ENCODE measurements at regions of chr19 and their contacts with region 1.

Region 1: GRCh38 chr19:4267101-4267900 is 11.8 kb upstream of the SHD start:
- DNase-seq: peak; percentile 61 to 90
- H3K4me3 ChIP-seq: no peak overlapping the region
- H3K27ac ChIP-seq: no peak overlapping the region
- H3K4me1 ChIP-seq: no peaks in the 10 kb centered on the region; a peak in 1 of 7 replicates
- H3K27me3 ChIP-seq: no peaks in the 10 kb centered on the region
- CTCF ChIP-seq: peak; percentile 92 to 94 (median 94)
- EP300 ChIP-seq: no peak
- POLR2A ChIP-seq: no peak
- RAD21 ChIP-seq: peak; percentile 87 to 88

Region 2: GRCh38 chr19:4194353-4194752 is 72.9 kb before region 1 on chr19:
- CTCF ChIA-PET with region 1: no interaction called
- POLR2A ChIA-PET with region 1: no interaction called
- DNase-seq: no peak
- H3K4me3 ChIP-seq: no peak overlapping the region
- H3K27ac ChIP-seq: no peak overlapping the region
- H3K4me1 ChIP-seq: peaks cover 0 to 2% (median 0%) of the 10 kb centered on the region in 4 experiments; a peak in 3 of 7 replicates
- H3K27me3 ChIP-seq: peaks cover 0 to 7% (median 3%) of the 10 kb centered on the region in 4 experiments; a peak in 2 of 7 replicates
- CTCF ChIP-seq: no peak
- EP300 ChIP-seq: no peak
- POLR2A ChIP-seq: no peak
- RAD21 ChIP-seq: no peak

Region 3: DNA sequence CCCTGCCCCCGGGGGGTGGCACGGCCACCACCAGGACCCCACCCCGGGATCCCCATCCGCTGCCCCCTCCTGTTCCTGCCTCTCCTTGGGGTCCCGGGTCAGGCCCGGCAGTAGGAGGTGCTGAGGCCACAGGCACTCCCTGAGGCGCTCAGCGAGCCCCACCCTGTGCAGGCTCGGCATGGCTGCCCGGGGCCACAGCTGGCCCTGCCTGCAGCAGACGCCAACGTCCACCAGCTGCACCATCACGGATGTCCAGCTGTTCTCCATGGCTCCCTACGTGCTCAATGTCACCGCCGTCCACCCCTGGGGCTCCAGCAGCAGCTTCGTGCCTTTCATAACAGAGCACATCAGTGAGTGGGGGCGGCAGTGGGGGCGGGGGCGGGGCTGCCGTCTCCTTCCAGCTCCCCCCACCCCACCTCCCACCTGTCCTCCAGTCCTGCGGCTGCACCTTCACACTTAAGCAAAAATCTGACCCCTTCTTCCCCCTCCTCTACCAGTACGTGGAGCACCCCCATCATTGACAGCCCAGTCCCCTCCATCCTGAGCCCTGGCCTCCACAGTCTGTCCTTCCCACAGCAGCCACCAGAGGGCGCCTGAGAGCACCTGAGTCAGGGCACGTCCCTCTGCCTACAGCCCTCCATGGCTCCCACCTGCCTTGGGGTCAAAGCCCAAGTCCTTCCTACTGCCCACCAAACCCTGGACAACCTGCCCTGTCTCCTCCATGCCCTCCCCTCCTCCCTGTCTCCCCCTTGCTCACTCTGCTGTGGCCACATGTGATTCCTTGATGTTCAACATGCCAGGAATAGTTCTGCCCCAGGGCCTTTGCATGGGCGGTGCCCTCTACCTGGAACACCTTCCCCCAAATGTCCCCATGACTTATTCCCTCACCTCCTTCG is 34.1 kb before region 1 on chr19:
- CTCF ChIA-PET with region 1: interaction called, 12 read pairs
- POLR2A ChIA-PET with region 1: interaction called, 3 read pairs
- DNase-seq: peak in 1 of 2 experiments; percentile 98
- H3K4me3 ChIP-seq: no peak overlapping the region
- H3K27ac ChIP-seq: no peak overlapping the region
- H3K4me1 ChIP-seq: peaks cover 0 to 7% (median 3%) of the 10 kb centered on the region in 4 experiments; a peak in 3 of 7 replicates
- H3K27me3 ChIP-seq: no peaks in the 10 kb centered on the region
- CTCF ChIP-seq: peak; percentile 80 to 97 (median 96)
- EP300 ChIP-seq: no peak
- POLR2A ChIP-seq: no peak
- RAD21 ChIP-seq: peak; percentile 31 to 39; a peak in 3 of 4 replicates

Region 4: GRCh38 chr19:4256563-4256962 is 10.7 kb before region 1 on chr19:
- CTCF ChIA-PET with region 1: interaction called, 27 read pairs
- POLR2A ChIA-PET with region 1: interaction called, 7 read pairs
- DNase-seq: no peak
- H3K4me3 ChIP-seq: no peak overlapping the region
- H3K27ac ChIP-seq: no peak overlapping the region
- H3K4me1 ChIP-seq: no peaks in the 10 kb centered on the region
- H3K27me3 ChIP-seq: no peaks in the 10 kb centered on the region
- CTCF ChIP-seq: peak; percentile 40 to 71 (median 66)
- EP300 ChIP-seq: no peak
- POLR2A ChIP-seq: no peak
- RAD21 ChIP-seq: no peak

Region 5: GRCh38 chr19:4284176-4284958 is 17.1 kb after region 1 on chr19:
- CTCF ChIA-PET with region 1: interaction called, 27 read pairs
- POLR2A ChIA-PET with region 1: interaction called, 11 read pairs
- DNase-seq: peak; percentile 71 to 89
- H3K4me3 ChIP-seq: peak overlapping the region; percentile 7 to 46 (median 16); a peak in 5 of 8 replicates
- H3K27ac ChIP-seq: no peak overlapping the region
- H3K4me1 ChIP-seq: peaks cover 0 to 4% (median 1%) of the 10 kb centered on the region in 4 experiments; a peak in 4 of 7 replicates
- H3K27me3 ChIP-seq: peaks cover 9 to 27% (median 23%) of the 10 kb centered on the region in 4 experiments
- CTCF ChIP-seq: no peak
- EP300 ChIP-seq: no peak
- POLR2A ChIP-seq: no peak
- RAD21 ChIP-seq: no peak

Region 6: GRCh38 chr19:4304530-4305252 is 37.4 kb after region 1 on chr19 and contains the start of gene FSD1:
- CTCF ChIA-PET with region 1: interaction called, 47 read pairs
- POLR2A ChIA-PET with region 1: interaction called, 5 read pairs
- DNase-seq: peak; percentile 39 to 95
- H3K4me3 ChIP-seq: peak within 1 kb of the TSS; percentile 14 to 58 (median 42); a peak in 6 of 8 replicates
- H3K27ac ChIP-seq: no peak within 1 kb of the TSS
- H3K4me1 ChIP-seq: peaks cover 0 to 8% (median 0%) of the 10 kb centered on the region in 4 experiments; a peak in 3 of 7 replicates
- H3K27me3 ChIP-seq: no peaks in the 10 kb centered on the region
- CTCF ChIP-seq: no peak
- EP300 ChIP-seq: no peak
- POLR2A ChIP-seq: no peak
- RAD21 ChIP-seq: no peak
- total RNA-seq, gene FSD1: 54.8 and 58.8 TPM in 2 replicates

Region 7: DNA sequence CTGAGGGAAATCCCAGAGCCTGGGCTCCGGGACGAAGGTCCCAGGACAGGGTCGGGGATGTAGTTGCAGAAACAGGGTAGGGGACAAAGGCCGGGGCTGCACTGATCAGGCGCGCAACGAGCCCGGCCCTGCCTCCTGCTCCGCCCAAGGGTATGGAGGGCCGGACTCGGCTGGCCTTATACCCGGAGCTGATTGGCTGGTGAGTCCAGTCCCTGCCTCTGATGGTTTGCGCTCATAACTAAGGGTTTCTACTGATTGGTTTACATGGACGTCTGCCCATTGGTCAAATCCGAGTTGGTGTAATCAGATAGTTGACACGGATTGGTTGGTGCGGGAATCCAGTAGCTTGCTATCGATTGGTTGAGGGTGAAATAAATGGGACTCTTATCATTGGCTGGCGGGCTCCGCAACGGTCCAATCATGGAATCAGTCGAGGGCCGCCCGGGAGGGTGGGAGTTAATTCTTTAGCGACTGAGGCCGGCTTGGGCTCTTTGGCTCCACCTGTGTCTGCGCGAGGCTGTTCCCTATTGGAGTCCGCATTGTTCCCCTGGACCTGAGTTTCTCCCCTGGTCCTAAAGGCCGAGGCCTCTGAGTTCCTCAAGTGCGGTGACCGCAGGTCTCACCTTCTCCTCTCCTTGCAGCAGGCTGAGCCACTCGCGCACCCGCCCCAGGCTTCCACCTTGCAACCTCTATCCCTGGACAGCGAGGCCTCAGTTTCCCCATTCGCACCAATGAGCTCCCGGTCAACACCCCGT is 75.5 kb after region 1 on chr19:
- CTCF ChIA-PET with region 1: interaction called, 311 read pairs
- POLR2A ChIA-PET with region 1: interaction called, 36 read pairs
- DNase-seq: peak; percentile 94 to 97
- H3K4me3 ChIP-seq: peak overlapping the region; percentile 66 to 92 (median 78)
- H3K27ac ChIP-seq: peak overlapping the region; percentile 96
- H3K4me1 ChIP-seq: peaks cover 0 to 16% (median 8%) of the 10 kb centered on the region in 4 experiments; a peak in 6 of 7 replicates
- H3K27me3 ChIP-seq: no peaks in the 10 kb centered on the region
- CTCF ChIP-seq: peak; percentile 23 to 50 (median 35); a peak in 3 of 4 replicates
- EP300 ChIP-seq: no peak
- POLR2A ChIP-seq: peak; percentile 93 to 99
- RAD21 ChIP-seq: peak; percentile 17 to 23; a peak in 2 of 4 replicates

Region 8: DNA sequence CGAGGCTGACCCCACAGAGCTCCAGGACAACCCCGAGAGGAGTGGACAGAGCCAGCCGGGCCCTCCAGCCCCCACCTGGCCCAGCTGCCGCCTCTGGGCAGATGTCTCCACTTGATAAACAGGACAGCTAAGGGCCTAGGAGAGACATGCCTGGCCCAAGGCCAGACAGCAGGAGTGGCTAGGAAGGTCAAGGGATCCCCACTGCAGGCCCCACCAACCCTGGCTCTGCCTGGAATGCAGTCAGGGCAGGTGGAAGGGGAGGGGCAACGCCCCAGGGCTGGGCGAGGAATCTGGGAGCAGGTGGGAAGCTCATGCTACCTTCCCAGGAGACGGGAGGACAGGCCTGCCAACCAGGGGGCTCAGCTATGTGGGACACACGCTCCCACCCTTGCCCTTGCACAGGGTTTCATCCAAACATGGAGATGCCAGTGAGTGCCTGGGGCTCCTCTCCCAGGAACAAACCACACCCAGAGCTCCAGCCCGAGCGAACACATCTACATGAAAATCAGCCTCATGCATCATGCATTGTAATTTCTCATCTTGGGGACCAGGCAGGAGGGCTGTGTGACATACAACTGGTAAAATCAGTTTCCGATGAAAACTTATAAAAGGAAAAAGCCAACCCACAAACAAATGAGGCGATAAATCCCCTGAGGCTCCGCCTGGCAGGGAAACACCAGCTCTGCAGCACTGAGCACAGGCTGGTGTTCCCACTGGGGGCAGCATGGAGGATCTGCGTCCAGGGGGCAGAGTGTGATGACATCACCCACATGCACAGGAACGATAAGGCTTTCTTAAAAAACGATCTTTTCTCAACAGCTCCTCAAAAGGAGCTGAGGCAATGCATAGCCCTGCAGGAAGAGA is 108.1 kb after region 1 on chr19:
- CTCF ChIA-PET with region 1: interaction called, 13 read pairs
- POLR2A ChIA-PET with region 1: interaction called, 4 read pairs
- DNase-seq: peak; percentile 51 to 81
- H3K4me3 ChIP-seq: peak overlapping the region in 2 of 4 experiments; percentile 12 to 29; a peak in 3 of 8 replicates
- H3K27ac ChIP-seq: peak overlapping the region; percentile 82
- H3K4me1 ChIP-seq: peaks cover 5 to 43% (median 35%) of the 10 kb centered on the region in 4 experiments
- H3K27me3 ChIP-seq: no peaks in the 10 kb centered on the region
- CTCF ChIP-seq: peak; percentile 34 to 61 (median 59); a peak in 3 of 4 replicates
- EP300 ChIP-seq: no peak
- POLR2A ChIP-seq: no peak
- RAD21 ChIP-seq: no peak; a peak in 1 of 4 replicates